PC-3 (cell line): ENCODE measurements at regions of chr11 and their contacts with region 1.

Region 1: DNA sequence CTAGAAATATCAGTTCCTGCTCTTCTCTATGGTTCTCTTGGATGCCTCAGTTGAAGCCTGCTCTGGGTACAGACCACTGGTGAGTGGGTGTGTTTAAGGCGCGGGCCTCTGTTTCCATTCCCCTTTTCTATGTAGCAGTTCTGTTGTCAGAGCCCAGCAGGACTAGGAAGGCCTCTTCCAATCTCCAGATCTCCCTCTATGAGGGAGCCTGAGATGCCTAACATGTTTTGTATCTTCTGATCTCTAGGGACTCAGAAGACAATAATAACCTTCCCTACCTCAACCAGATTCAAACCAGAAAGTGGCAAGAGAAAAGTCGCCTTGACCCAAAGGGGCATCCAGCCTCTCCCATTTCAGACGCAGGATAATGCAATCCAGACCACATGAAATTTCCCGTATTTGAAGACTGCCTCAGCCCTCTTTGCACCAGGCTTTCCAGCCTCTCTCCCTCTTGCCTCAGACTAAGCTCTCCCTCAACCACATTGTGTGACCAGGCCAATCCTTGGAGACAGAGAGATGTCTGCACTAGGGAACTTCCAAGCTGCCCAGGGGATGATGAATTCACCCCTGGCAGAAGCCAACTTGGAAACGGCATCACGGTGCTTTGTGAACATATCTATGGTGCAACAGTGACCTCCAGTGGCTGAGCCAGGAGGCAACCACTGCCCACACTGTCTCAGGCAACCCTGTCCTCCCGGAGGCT is 150.1 kb upstream of the UBASH3B start:
- DNase-seq: peak; percentile 92
- ATAC-seq: peak; percentile 100
- H3K4me3 ChIP-seq: no peak overlapping the region
- H3K27ac ChIP-seq: no peak overlapping the region
- H3K4me1 ChIP-seq: no peaks in the 10 kb centered on the region
- H3K27me3 ChIP-seq: peaks cover 81% of the 10 kb centered on the region
- CTCF ChIP-seq: peak; percentile 95

Region 2: DNA sequence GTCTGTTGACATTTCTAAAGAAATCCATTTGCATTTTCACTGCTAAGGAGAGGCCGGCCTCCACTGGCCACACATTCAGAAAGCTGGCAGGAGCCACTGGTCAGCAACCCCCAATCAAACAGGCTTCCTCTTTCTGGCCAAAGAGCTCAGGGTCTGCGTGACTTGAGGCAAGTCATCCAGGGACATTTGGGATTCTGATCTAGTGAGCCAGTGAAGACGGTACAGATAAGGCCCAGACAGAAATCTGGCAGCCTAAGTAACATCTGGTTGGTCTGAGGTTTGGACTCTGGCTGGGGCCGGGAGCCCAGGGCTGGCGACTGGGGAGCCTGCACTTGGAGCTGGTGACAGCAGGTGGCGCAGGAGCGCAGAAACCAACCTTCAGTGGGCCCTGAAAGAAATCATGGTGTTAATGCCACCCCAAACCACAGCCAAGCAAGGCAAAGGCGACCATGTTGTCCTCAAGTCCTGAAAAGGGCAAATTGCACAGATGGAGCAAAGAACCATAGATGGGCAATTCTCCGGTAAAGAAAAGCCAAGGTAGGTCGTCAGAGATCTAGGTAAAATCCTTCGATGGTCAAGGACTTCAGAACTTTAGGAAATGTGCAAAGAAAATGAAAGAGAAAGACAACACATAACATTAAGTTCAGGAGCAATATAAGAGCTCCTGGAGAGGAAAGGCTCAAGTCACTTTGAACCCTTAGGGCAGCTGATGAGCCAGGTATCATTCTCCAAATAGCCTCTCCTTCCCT is 290.0 kb before region 1 on chr11:
- CTCF ChIA-PET with region 1: interaction called, 12 read pairs
- POLR2A ChIA-PET with region 1: no interaction called
- intact Hi-C with region 1: loop called (anchors 1 kb)
- DNase-seq: peak; percentile 80
- ATAC-seq: peak; percentile 98
- H3K4me3 ChIP-seq: no peak overlapping the region
- H3K27ac ChIP-seq: no peak overlapping the region
- H3K4me1 ChIP-seq: peaks cover 5% of the 10 kb centered on the region; the same call in 1 of the 2 replicates
- H3K27me3 ChIP-seq: no peaks in the 10 kb centered on the region; the same call in 1 of the 2 replicates
- CTCF ChIP-seq: peak; percentile 98